ENCODE measurements at regions of chr20 and their contacts with region 1.

Region 1: GRCh38 chr20:19784511-19785172 is 26.6 kb downstream of the RIN2 start:
- DNase-seq: peak in 1 of 2 experiments; percentile 49
- H3K4me3 ChIP-seq: no peak overlapping the region
- H3K27ac ChIP-seq: no peak overlapping the region
- H3K4me1 ChIP-seq: peaks cover 0 to 5% (median 2%) of the 10 kb centered on the region in 4 experiments; a peak in 5 of 7 replicates
- H3K27me3 ChIP-seq: no peaks in the 10 kb centered on the region
- CTCF ChIP-seq: peak; percentile 40 to 72 (median 69)
- EP300 ChIP-seq: no peak
- POLR2A ChIP-seq: no peak
- RAD21 ChIP-seq: peak; percentile 79 to 82

Region 2: DNA sequence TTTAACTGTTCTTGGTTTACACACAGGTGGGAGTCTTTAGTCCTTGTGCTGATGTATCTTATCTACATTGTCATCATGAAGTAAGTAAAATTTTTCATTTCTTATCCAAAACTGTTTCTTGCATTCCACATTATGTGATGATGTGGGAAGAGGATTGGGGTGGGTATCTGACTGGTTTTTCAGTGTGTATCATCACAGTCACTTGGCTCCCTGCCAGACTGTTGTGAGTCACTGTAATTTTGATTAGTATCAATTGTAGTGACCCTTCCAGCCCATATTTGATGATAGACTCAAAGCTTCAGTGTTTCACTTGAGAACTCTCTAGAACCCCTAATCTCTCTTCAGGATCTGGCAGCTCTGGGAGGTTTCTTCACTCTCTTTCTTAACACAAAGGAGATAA is 111.1 kb before region 1 on chr20:
- CTCF ChIA-PET with region 1: no interaction called
- POLR2A ChIA-PET with region 1: no interaction called
- DNase-seq: no peak
- H3K4me3 ChIP-seq: no peak overlapping the region
- H3K27ac ChIP-seq: no peak overlapping the region
- H3K4me1 ChIP-seq: no peaks in the 10 kb centered on the region
- H3K27me3 ChIP-seq: no peaks in the 10 kb centered on the region
- CTCF ChIP-seq: no peak
- EP300 ChIP-seq: no peak
- POLR2A ChIP-seq: no peak
- RAD21 ChIP-seq: no peak

Region 3: DNA sequence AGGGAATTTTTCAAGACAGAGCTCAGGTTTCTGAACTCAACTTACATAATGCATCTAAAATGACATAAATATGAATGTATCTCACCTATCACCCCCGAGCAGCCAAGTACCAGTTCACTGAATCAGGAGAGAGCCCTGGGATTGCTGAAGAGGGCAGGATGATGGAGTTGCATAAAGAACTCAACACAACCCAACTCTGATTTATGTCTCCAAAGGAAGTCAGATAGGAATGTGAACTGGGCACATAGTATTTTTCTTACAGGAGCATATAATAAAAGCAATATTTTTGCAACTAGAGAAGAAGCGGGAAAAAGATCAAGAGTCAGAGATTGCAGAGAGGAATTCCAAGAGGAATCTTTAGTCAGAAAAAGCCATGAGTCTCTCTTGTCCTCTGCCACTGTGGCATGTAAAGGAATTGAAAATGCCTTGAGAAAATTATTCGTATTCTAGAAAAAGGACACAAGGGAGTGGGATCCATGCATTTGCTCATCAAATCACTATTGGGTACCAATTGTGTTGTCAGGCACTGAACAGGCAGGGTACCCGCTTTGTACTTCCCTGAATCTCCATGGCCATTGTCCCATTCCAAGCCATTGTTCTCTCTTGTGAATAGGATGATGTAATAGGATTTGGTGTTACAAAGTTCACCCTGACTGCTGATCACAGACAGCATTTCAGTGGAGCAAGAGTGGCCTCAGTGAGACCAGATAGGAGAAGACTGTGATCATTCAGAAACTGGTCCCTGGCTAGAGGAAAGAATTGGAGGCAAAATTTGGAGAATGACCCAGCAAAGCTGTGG is 10.3 kb before region 1 on chr20:
- CTCF ChIA-PET with region 1: interaction called, 24 read pairs
- POLR2A ChIA-PET with region 1: interaction called, 3 read pairs
- DNase-seq: no peak
- H3K4me3 ChIP-seq: no peak overlapping the region
- H3K27ac ChIP-seq: no peak overlapping the region
- H3K4me1 ChIP-seq: peaks cover 0 to 12% (median 1%) of the 10 kb centered on the region in 4 experiments; a peak in 3 of 7 replicates
- H3K27me3 ChIP-seq: no peaks in the 10 kb centered on the region; a peak in 1 of 7 replicates
- CTCF ChIP-seq: no peak
- EP300 ChIP-seq: no peak
- POLR2A ChIP-seq: no peak
- RAD21 ChIP-seq: no peak

Region 4: DNA sequence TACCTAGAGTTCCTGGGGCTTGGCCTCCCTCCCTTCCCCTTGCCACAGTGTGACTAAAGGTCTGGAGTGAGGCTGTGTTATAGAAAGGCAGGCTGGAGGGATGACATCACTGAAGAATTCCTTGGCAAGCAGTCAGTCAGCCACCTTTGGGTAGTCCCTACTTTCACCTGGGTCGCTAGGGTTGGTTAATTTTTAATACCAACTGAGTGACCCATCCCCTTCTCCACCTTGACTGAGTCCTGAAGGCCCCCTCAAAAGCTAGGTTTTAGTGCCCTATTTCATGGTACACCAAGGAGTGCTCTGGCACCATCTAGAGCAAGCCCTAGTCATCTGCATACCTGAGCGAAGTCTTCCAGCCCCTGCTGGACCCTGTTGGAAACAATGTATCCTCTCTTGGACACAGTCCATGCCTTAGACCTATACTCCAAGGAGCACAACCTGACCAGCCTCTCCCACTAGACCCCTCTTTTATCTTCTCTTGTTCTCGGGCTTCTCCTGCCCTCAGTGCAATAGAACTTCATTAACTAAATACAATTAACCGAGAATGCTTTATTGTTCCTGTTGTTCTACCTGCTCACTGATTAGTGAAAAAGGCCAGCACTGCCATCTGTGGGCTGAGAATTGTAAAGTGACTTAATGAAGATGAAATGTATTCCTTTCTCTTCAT is 18.0 kb after region 1 on chr20:
- CTCF ChIA-PET with region 1: interaction called, 15 read pairs
- POLR2A ChIA-PET with region 1: interaction called, 3 read pairs
- DNase-seq: no peak
- H3K4me3 ChIP-seq: no peak overlapping the region
- H3K27ac ChIP-seq: no peak overlapping the region
- H3K4me1 ChIP-seq: no peaks in the 10 kb centered on the region
- H3K27me3 ChIP-seq: no peaks in the 10 kb centered on the region
- CTCF ChIP-seq: peak; percentile 40 to 95 (median 61)
- EP300 ChIP-seq: no peak
- POLR2A ChIP-seq: no peak
- RAD21 ChIP-seq: peak; percentile 53 to 71